Heart left ventricle (tissue), 16 donors: ENCODE measurements at regions of chr19 and their contacts with region 1.

Region 1: DNA sequence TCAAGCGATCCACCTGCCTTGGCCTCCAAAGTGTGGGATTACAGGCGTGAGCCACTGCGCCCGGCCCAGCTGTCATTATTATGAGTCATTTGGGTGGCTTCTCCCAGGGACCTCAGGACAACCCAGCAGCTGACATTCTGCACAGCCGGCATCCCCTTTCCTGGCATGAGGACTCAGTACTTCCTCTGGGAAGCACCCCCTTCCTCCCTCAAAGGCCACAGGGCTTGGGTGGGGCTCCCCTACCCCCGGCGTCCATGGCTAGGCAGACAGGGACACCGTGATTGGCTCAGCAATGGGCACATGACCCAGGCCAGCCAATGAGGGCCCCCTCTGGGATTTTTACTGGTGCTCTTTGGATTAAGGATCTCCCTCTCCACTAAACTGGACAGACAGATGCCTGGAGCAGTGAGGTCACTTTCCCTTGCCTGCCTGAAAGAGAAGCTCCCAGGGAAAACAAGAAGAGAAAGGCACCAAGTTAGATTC is 6.0 kb downstream of the KANK2 start:
- DNase-seq: peak; percentile 79 to 94 (median 90)
- ATAC-seq: peak; percentile 44 to 86 (median 81)
- H3K4me3 ChIP-seq: peak overlapping the region in 2 of 12 donors; percentile 16 to 22
- H3K27ac ChIP-seq: peak overlapping the region in 11 of 12 donors; percentile 62 to 97 (median 81)
- H3K4me1 ChIP-seq: peaks cover 13 to 88% (median 69%) of the 10 kb centered on the region in 12 donors
- H3K27me3 ChIP-seq: no peaks in the 10 kb centered on the region
- CTCF ChIP-seq: no peak
- POLR2A ChIP-seq: peak in 1 of 2 donors; percentile 64

Region 2: DNA sequence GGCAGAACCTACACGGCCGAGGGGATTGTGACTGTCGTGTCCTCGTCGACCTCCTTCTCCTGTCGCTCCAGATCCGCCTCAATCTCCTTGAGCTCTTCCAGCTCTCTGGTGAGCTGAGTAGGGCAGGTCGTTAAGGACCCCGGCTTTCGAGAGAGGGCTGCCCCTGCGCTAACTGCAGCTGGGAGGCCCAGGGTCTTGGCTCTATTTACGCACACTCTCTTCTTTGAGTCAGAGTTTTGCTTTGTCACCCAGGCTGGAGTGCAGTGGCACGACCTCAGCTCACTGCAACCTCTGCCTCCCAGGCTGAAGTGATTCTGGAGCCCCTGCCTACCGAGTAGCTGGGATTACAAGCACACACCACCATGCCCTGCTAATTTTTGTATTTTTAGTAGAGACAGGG is 43.3 kb before region 1 on chr19:
- intact Hi-C with region 1: loop called in 3 of 10 experiments (anchors 2 to 5 kb)
- DNase-seq: no peak
- ATAC-seq: no peak
- H3K4me3 ChIP-seq: no peak overlapping the region
- H3K27ac ChIP-seq: no peak overlapping the region
- H3K4me1 ChIP-seq: peaks cover 6 to 37% (median 23%) of the 10 kb centered on the region in 12 donors
- H3K27me3 ChIP-seq: no peaks in the 10 kb centered on the region
- CTCF ChIP-seq: no peak
- POLR2A ChIP-seq: no peak